GM12878 (cell line): ENCODE measurements at regions of chr2 and their contacts with region 1.

Region 1: DNA sequence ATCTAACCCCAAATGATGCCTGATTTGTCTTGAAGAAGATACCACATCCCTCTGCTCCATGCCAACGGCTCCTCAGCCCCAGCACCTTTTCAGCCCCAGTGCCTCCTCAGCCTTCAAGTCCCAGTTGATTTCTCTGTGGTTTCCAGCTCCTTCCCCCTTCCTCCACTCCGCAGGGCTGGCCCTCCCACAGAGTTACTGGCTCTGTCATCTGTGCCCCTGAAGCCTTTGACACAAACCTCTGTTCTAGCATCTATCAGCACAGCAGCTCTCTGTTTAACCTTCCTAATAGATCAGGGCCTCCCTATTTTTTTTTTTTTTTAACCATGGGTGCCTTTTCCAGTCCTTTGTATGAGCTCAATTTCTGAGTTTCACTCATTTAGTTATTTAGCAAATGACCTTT is 201.3 kb upstream of the CXCR4 start:
- DNase-seq: no peak
- ATAC-seq: peak; percentile 81
- H3K4me3 ChIP-seq: no peak overlapping the region
- H3K27ac ChIP-seq: no peak overlapping the region
- H3K4me1 ChIP-seq: peaks cover 5% of the 10 kb centered on the region; the same call in 1 of the 2 replicates
- H3K27me3 ChIP-seq: no peaks in the 10 kb centered on the region
- CTCF ChIP-seq: no peak
- EP300 ChIP-seq: no peak
- POLR2A ChIP-seq: no peak
- RAD21 ChIP-seq: no peak

Region 2: DNA sequence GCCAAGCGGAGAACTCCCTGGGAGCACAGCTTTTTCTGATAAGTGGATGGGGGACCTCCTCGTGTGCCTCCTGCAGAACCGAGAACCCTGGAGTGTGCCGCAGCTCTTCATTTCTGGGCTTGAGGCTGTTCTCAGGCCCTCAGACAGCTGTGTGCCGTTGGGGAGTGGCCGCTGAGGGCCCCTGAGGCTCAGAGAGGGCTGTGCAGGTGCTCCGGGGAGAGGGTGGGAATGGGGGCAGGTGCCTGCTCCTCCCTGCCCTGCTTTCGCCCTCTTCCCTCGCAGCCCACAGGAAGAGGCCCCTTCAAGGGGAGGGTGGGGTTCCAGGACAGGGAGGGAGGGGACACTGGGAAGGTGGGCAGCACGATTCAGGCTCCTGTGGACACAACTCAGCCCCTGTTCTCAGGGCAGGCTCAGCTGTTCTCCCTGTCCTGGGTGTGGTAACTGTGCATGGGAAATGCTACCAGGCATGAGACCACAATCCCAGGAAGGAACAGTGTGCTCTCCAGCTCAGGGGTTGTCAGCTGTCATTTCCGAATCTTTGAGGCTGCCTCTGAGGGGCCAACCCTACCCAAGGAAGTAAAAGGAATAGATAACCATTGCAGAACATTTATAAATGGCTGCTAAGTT is 493.6 kb before region 1 on chr2:
- CTCF ChIA-PET with region 1: no interaction called
- POLR2A ChIA-PET with region 1: no interaction called
- RAD21 ChIA-PET with region 1: no interaction called
- SMC1A ChIA-PET with region 1: no interaction called
- in situ Hi-C with region 1: no loop called
- intact Hi-C with region 1: no loop called
- DNase-seq: no peak
- ATAC-seq: peak; percentile 56
- H3K4me3 ChIP-seq: no peak overlapping the region
- H3K27ac ChIP-seq: no peak overlapping the region
- H3K4me1 ChIP-seq: peaks cover 24% of the 10 kb centered on the region
- H3K27me3 ChIP-seq: no peaks in the 10 kb centered on the region
- CTCF ChIP-seq: no peak
- EP300 ChIP-seq: no peak
- POLR2A ChIP-seq: no peak
- RAD21 ChIP-seq: no peak

Region 3: GRCh38 chr2:136305517-136306192 is 13.6 kb before region 1 on chr2:
- CTCF ChIA-PET with region 1: interaction called, 3 read pairs
- POLR2A ChIA-PET with region 1: interaction called, 7 read pairs
- RAD21 ChIA-PET with region 1: interaction called, 18 read pairs
- SMC1A ChIA-PET with region 1: interaction called, 26 read pairs
- in situ Hi-C with region 1: no loop called
- intact Hi-C with region 1: no loop called
- DNase-seq: no peak
- ATAC-seq: peak; percentile 93
- H3K4me3 ChIP-seq: no peak overlapping the region
- H3K27ac ChIP-seq: no peak overlapping the region
- H3K4me1 ChIP-seq: peaks cover 6% of the 10 kb centered on the region
- H3K27me3 ChIP-seq: peaks cover 0 to 5% of the 10 kb centered on the region in 2 experiments; a peak in 1 of 4 replicates
- CTCF ChIP-seq: no peak
- EP300 ChIP-seq: peak; percentile 62 to 64; a peak in 1 of 4 replicates
- POLR2A ChIP-seq: no peak
- RAD21 ChIP-seq: no peak

Region 4: GRCh38 chr2:136394136-136395060 is 75.2 kb after region 1 on chr2:
- CTCF ChIA-PET with region 1: no interaction called
- POLR2A ChIA-PET with region 1: no interaction called
- RAD21 ChIA-PET with region 1: no interaction called
- SMC1A ChIA-PET with region 1: no interaction called
- in situ Hi-C with region 1: no loop called
- intact Hi-C with region 1: no loop called
- DNase-seq: no peak
- ATAC-seq: peak; percentile 74
- H3K4me3 ChIP-seq: no peak overlapping the region
- H3K27ac ChIP-seq: no peak overlapping the region
- H3K4me1 ChIP-seq: peaks cover 12% of the 10 kb centered on the region
- H3K27me3 ChIP-seq: no peaks in the 10 kb centered on the region
- CTCF ChIP-seq: no peak
- EP300 ChIP-seq: no peak
- POLR2A ChIP-seq: no peak
- RAD21 ChIP-seq: no peak